ENCODE measurements at regions of chr1 and their contacts with region 1.

Region 1: GRCh38 chr1:151251656-151252470 is 2.7 kb upstream of the PSMD4 start:
- DNase-seq: peak; percentile 81
- ATAC-seq: peak; percentile 43
- H3K4me3 Mint-ChIP-seq: no peak overlapping the region
- H3K27ac Mint-ChIP-seq: no peak overlapping the region
- H3K4me1 Mint-ChIP-seq: peaks cover 22% of the 10 kb centered on the region
- H3K27me3 Mint-ChIP-seq: no peaks in the 10 kb centered on the region

Region 2: DNA sequence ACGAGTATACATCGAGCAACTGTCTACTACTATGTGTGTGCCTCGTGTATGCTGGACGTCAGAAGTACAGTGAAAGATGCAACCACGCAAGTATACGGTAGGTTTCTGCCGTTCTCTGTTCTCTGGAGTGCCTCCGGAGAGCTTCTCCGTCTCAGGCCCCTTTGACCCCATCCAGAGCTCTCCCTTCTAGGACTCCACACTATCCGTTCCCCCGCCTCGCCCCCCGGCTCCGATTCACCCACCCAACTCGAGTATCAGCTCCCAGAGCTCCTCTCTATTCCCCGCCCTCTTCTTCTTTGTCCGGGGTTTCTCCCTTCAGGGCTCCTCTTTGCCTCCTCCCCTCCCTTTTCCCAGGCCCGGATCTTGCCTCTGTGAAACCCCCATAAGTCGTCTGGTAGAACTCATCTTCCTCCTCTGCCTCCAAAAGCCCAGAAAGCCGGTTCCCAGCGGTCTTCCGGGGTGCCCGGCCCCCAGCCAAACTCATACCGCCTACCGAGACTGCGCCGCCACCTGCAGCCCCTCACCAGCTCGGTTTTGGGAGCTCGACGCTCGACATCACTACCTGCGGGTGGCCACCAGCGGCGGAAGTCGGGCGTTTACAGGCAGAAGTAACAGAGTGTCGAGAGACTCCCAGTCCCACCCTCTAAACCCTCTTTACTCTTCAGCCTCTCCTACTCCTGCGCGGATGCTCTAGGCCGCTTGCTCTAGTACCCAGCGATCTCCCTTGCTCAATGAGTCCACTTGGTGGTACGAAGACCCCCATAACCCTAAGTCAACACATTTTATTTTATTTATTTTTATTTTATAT is 62.0 kb before region 1 on chr1 and contains the start of gene VPS72:
- CTCF ChIA-PET with region 1: interaction called, 18 read pairs
- DNase-seq: peak; percentile 94
- ATAC-seq: peak; percentile 98
- H3K4me3 Mint-ChIP-seq: peak within 1 kb of the TSS; percentile 92
- H3K27ac Mint-ChIP-seq: peak within 1 kb of the TSS; percentile 98
- H3K4me1 Mint-ChIP-seq: peaks cover 25% of the 10 kb centered on the region
- H3K27me3 Mint-ChIP-seq: peaks cover 4% of the 10 kb centered on the region
- total RNA-seq, gene VPS72: 78.3 to 86.2 TPM

Region 3: GRCh38 chr1:151198255-151199127 is 53.4 kb before region 1 on chr1 and contains the start of gene PIP5K1A:
- CTCF ChIA-PET with region 1: interaction called, 16 read pairs
- DNase-seq: peak; percentile 99
- ATAC-seq: peak; percentile 98
- H3K4me3 Mint-ChIP-seq: peak within 1 kb of the TSS; percentile 91
- H3K27ac Mint-ChIP-seq: peak within 1 kb of the TSS; percentile 97
- H3K4me1 Mint-ChIP-seq: peaks cover 43% of the 10 kb centered on the region
- H3K27me3 Mint-ChIP-seq: peaks cover 4% of the 10 kb centered on the region
- total RNA-seq, gene PIP5K1A: 55.2 to 70.3 TPM

Region 4: GRCh38 chr1:151237678-151238466 is 14.0 kb before region 1 on chr1:
- CTCF ChIA-PET with region 1: interaction called, 10 read pairs
- DNase-seq: no peak
- ATAC-seq: no peak
- H3K4me3 Mint-ChIP-seq: no peak overlapping the region
- H3K27ac Mint-ChIP-seq: peak overlapping the region; percentile 12
- H3K4me1 Mint-ChIP-seq: peaks cover 7% of the 10 kb centered on the region
- H3K27me3 Mint-ChIP-seq: no peaks in the 10 kb centered on the region

Region 5: DNA sequence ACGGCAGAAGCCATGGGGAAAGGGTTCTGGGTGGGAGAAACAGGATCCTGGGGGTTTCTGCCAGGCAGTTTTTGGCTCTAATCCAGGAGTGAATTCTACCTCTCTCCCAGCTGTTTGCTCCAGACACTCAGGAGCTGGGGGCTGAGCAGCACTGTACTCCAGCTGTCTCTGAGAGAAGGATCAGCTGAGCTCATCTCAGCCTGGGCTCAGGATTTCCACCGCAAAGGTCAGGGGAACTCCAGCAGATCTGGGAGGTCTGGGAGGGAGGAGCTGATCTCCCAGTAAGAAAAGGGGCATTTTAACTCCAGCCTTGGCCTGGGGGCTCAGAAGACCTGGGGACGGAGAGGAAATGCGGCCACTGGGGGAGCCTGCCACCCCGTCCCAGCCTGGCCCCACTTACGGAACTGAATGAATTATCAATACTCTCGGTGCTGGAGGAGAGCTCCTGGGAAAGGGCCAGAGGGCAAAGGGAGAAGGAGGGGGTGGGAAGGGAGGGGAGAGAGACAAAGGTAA is 58.0 kb after region 1 on chr1:
- CTCF ChIA-PET with region 1: no interaction called
- DNase-seq: no peak
- ATAC-seq: no peak
- H3K4me3 Mint-ChIP-seq: no peak overlapping the region
- H3K27ac Mint-ChIP-seq: no peak overlapping the region
- H3K4me1 Mint-ChIP-seq: peaks cover 24% of the 10 kb centered on the region
- H3K27me3 Mint-ChIP-seq: no peaks in the 10 kb centered on the region

Measured in activated CD8-positive, alpha-beta memory T cell treated with anti-CD3 and anti-CD28 coated beads, Interleukin-2, amount 10 ng/mL, durations not matched to agents 7 days and 5 days (primary cell).